ENCODE measurements at regions of chr10 and their contacts with region 1.

Region 1: DNA sequence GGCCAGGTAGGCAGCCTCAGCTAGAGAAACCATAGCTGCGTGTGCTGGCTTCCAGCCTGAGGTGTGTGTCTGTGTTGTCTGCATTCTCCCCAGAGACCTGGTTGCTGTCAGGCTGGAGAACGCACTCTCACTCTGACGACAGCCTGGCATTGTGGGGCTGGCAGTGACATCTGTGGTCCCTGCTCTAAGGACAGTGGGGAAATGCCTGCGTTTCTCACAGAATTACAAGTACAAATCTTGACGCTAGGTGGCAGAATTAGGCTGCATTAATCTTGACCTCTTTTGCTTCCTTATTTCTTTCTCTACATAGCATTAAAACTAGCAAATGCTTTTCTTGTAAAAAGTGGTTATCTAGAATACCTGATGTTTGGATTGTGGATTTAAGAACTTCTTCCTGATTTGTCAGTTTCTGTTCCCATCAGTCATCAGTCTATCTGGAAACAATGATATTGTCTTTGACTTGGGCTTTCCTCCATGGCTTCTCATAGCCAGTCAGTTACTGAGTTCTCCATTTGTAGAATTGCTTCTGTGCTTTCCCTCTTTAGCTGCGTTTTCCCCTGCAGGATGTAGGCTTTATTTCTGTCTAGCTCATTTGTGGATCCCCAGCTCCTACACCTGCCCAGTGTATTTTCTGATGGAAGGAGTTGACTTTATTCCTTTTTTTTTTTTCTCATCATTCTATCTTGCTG is 86.0 kb downstream of the FANK1 start:
- DNase-seq: no peak
- ATAC-seq: peak; percentile 63
- H3K4me3 ChIP-seq: no peak overlapping the region
- H3K27ac ChIP-seq: no peak overlapping the region
- H3K4me1 ChIP-seq: no peaks in the 10 kb centered on the region
- H3K27me3 ChIP-seq: no peaks in the 10 kb centered on the region

Region 2: GRCh38 chr10:125726914-125727313 is 255.5 kb before region 1 on chr10:
- intact Hi-C with region 1: no loop called
- DNase-seq: no peak
- ATAC-seq: no peak
- H3K4me3 ChIP-seq: no peak overlapping the region
- H3K27ac ChIP-seq: no peak overlapping the region
- H3K4me1 ChIP-seq: no peaks in the 10 kb centered on the region
- H3K27me3 ChIP-seq: no peaks in the 10 kb centered on the region

Region 3: GRCh38 chr10:126090911-126091728 is 108.7 kb after region 1 on chr10:
- intact Hi-C with region 1: loop called in 1 of 2 experiments (anchors 5 kb)
- DNase-seq: no peak
- ATAC-seq: no peak
- H3K4me3 ChIP-seq: no peak overlapping the region
- H3K27ac ChIP-seq: no peak overlapping the region
- H3K4me1 ChIP-seq: no peaks in the 10 kb centered on the region
- H3K27me3 ChIP-seq: no peaks in the 10 kb centered on the region

Region 4: DNA sequence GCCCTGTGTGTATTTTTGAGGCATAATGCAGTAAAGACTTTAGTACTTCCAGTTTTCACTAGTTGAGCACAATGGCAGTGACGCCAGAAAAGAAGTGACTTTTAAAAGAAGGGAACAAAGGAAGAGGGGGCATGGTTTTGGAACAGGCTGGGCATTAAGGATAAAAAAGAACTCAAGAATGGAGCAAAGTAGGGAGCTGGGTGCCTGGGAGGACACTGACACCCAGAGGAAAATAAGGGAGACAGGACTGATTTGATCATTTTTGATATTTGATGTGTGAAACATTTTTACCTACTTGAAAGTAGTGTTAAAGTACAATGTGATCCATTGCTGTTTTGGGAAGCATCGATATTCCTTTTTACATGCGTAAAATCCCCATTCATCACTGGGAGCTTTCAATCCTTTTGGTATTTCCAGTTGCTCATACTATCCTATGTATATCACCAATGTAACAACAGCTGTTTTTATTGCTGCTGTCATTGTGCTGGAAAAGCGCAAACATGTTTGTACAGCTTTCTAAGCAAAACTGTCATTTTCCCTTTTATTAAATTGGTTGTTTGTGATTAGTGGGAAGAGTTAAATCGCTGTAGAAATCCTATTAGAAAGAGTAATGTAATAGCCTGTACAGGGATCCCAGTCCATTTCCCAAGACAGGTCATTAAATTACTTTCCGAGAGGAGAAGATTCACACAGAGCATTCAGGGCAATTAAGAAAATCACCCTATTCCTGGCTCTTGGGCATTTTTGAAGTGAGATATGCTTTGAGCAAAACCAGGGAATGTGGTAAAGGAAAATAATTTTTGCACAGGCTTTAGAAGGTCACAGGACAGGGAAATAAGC is 320.6 kb after region 1 on chr10:
- intact Hi-C with region 1: loop called in 1 of 2 experiments (anchors 5 kb)
- DNase-seq: no peak
- ATAC-seq: no peak
- H3K4me3 ChIP-seq: no peak overlapping the region
- H3K27ac ChIP-seq: no peak overlapping the region
- H3K4me1 ChIP-seq: no peaks in the 10 kb centered on the region
- H3K27me3 ChIP-seq: no peaks in the 10 kb centered on the region

Region 5: GRCh38 chr10:126504063-126504739 is 521.8 kb after region 1 on chr10:
- intact Hi-C with region 1: loop called (anchors 1 to 2 kb)
- DNase-seq: no peak
- ATAC-seq: no peak
- H3K4me3 ChIP-seq: no peak overlapping the region
- H3K27ac ChIP-seq: no peak overlapping the region
- H3K4me1 ChIP-seq: no peaks in the 10 kb centered on the region
- H3K27me3 ChIP-seq: no peaks in the 10 kb centered on the region